ENCODE measurements at regions of chr15 and their contacts with region 1.

Region 1: GRCh38 chr15:84023636-84024035 is 211.9 kb upstream of the GOLGA6L4 start:
- DNase-seq: peak; percentile 69
- H3K4me3 Mint-ChIP-seq: no peak overlapping the region
- H3K27ac Mint-ChIP-seq: no peak overlapping the region
- H3K4me1 Mint-ChIP-seq: no peaks in the 10 kb centered on the region
- H3K27me3 Mint-ChIP-seq: peaks cover 18% of the 10 kb centered on the region
- CTCF ChIP-seq: peak; percentile 66

Region 2: GRCh38 chr15:83567318-83567717 is 456.3 kb before region 1 on chr15:
- CTCF ChIA-PET with region 1: interaction called, 3 read pairs
- intact Hi-C with region 1: loop called (anchors 1 kb)
- DNase-seq: no peak
- H3K4me3 Mint-ChIP-seq: no peak overlapping the region
- H3K27ac Mint-ChIP-seq: no peak overlapping the region
- H3K4me1 Mint-ChIP-seq: no peaks in the 10 kb centered on the region
- H3K27me3 Mint-ChIP-seq: no peaks in the 10 kb centered on the region
- CTCF ChIP-seq: no peak

Region 3: DNA sequence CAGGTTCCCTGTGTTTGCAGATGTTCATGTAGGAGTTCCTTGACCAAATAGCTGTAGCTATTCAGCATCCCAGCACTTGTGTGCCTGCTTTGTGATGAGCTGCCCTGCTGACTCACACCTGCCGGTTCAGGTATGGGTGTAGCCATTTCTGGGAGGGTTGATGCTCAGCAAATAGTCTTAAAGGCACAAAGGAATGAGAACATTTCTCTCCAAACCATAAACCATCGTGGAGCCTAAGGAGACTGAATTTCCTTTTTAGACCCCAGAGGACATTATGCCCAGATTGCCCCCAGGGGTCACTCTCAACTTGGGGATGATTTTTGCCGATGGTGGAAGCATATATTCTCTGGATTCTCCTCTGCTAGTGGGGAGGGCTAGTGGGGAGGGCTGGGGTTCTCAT is 289.1 kb before region 1 on chr15:
- CTCF ChIA-PET with region 1: no interaction called
- intact Hi-C with region 1: loop called (anchors 1 kb)
- DNase-seq: peak; percentile 63
- H3K4me3 Mint-ChIP-seq: no peak overlapping the region
- H3K27ac Mint-ChIP-seq: no peak overlapping the region
- H3K4me1 Mint-ChIP-seq: peaks cover 26% of the 10 kb centered on the region
- H3K27me3 Mint-ChIP-seq: no peaks in the 10 kb centered on the region
- CTCF ChIP-seq: peak; percentile 40

Region 4: DNA sequence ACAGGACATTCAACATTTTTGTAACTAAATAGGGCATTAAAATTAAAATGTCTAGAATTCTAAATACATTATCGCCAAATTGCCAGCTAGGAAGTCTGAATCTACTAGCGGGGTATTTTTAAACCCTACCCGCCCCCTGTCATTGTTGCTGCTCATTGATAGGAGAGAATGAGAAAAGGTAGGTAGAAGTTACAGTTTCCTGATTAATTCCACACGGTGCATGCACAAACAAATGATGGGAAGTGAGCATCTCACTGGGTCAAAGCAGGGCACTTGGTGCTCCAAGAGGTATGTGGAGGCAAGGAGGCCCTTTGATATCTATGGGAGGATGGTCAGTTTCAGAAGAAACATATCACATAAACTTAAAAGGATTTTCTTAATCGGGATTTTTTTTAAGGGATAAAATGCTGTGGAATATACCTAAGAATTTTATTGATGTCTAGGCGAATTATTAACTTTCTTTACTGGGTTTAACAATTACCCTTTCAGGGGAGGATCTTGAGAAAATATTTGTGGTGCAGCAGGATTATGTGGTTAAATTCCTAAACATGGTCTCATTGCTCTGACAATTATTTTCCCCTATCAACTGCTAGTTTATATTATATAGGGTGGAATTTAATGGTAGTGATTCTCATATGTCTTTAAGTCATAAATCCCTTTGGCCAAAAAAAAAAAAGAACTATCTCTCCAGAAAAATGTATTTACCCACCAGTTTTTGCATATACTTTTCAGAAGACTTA is 24.1 kb before region 1 on chr15:
- CTCF ChIA-PET with region 1: interaction called, 3 read pairs
- intact Hi-C with region 1: loop called (anchors 2 kb)
- DNase-seq: peak; percentile 27
- H3K4me3 Mint-ChIP-seq: no peak overlapping the region
- H3K27ac Mint-ChIP-seq: peak overlapping the region; percentile 46
- H3K4me1 Mint-ChIP-seq: peaks cover 28% of the 10 kb centered on the region
- H3K27me3 Mint-ChIP-seq: no peaks in the 10 kb centered on the region
- CTCF ChIP-seq: no peak

Region 5: GRCh38 chr15:84099181-84099580 is 75.5 kb after region 1 on chr15:
- CTCF ChIA-PET with region 1: no interaction called
- intact Hi-C with region 1: no loop called
- DNase-seq: peak; percentile 20
- H3K4me3 Mint-ChIP-seq: no peak overlapping the region
- H3K27ac Mint-ChIP-seq: no peak overlapping the region
- H3K4me1 Mint-ChIP-seq: no peaks in the 10 kb centered on the region
- H3K27me3 Mint-ChIP-seq: peaks cover 12% of the 10 kb centered on the region
- CTCF ChIP-seq: no peak

Measured in Calu3 (cell line).